ENCODE measurements at regions of chr12 and their contacts with region 1.

Region 1: GRCh38 chr12:53701518-53702260 is 25.6 kb downstream of the CALCOCO1 start:
- DNase-seq: peak; percentile 64 to 85
- ATAC-seq: peak; percentile 72 to 93 (median 92)
- H3K4me3 ChIP-seq: no peak overlapping the region
- H3K4me3 Mint-ChIP-seq: no peak overlapping the region
- H3K27ac ChIP-seq: no peak overlapping the region
- H3K27ac Mint-ChIP-seq: no peak overlapping the region
- H3K4me1 ChIP-seq: peaks cover 3% of the 10 kb centered on the region
- H3K4me1 Mint-ChIP-seq: peaks cover 11% of the 10 kb centered on the region in 2 donors
- H3K27me3 ChIP-seq: peaks cover 44% of the 10 kb centered on the region
- H3K27me3 Mint-ChIP-seq: peaks cover 63 to 81% of the 10 kb centered on the region in 2 donors
- CTCF ChIP-seq: peak; percentile 86

Region 2: GRCh38 chr12:53757095-53757770 is 55.5 kb after region 1 on chr12:
- intact Hi-C with region 1: loop called (anchors 2 kb)
- DNase-seq: peak; percentile 84 to 88
- ATAC-seq: peak; percentile 86 to 100 (median 96)
- H3K4me3 ChIP-seq: no peak overlapping the region
- H3K4me3 Mint-ChIP-seq: peak overlapping the region; percentile 65
- H3K27ac ChIP-seq: no peak overlapping the region
- H3K27ac Mint-ChIP-seq: peak overlapping the region in 1 of 2 donors; percentile 71
- H3K4me1 ChIP-seq: peaks cover 20% of the 10 kb centered on the region
- H3K4me1 Mint-ChIP-seq: peaks cover 16% of the 10 kb centered on the region in 2 donors
- H3K27me3 ChIP-seq: no peaks in the 10 kb centered on the region
- H3K27me3 Mint-ChIP-seq: peaks cover 33 to 36% of the 10 kb centered on the region in 2 donors
- CTCF ChIP-seq: peak; percentile 98

Measured in natural killer cell (primary cell).